Thyroid gland (tissue), 4 donors: ENCODE measurements at regions of chr21 and their contacts with region 1.

Region 1: GRCh38 chr21:42309753-42310221 is 5.4 kb downstream of the TFF3 start:
- DNase-seq: peak; percentile 70 to 79
- H3K4me3 ChIP-seq: no peak overlapping the region
- H3K27ac ChIP-seq: peak overlapping the region; percentile 51 to 95 (median 71)
- H3K4me1 ChIP-seq: peaks cover 29 to 42% of the 10 kb centered on the region in 2 donors
- H3K27me3 ChIP-seq: no peaks in the 10 kb centered on the region
- CTCF ChIP-seq: peak; percentile 70 to 93 (median 81)
- POLR2A ChIP-seq: no peak

Region 2: GRCh38 chr21:42381334-42381984 is 71.7 kb after region 1 on chr21:
- intact Hi-C with region 1: loop called (anchors 10 kb)
- DNase-seq: peak; percentile 72 to 82
- H3K4me3 ChIP-seq: no peak overlapping the region
- H3K27ac ChIP-seq: peak overlapping the region in 1 of 3 donors; percentile 24
- H3K4me1 ChIP-seq: peaks cover 10 to 31% of the 10 kb centered on the region in 2 donors
- H3K27me3 ChIP-seq: no peaks in the 10 kb centered on the region
- CTCF ChIP-seq: peak in 4 of 6 experiments; percentile 81 to 100 (median 92)
- POLR2A ChIP-seq: no peak